ENCODE measurements at regions of chr20 and their contacts with region 1.

Region 1: DNA sequence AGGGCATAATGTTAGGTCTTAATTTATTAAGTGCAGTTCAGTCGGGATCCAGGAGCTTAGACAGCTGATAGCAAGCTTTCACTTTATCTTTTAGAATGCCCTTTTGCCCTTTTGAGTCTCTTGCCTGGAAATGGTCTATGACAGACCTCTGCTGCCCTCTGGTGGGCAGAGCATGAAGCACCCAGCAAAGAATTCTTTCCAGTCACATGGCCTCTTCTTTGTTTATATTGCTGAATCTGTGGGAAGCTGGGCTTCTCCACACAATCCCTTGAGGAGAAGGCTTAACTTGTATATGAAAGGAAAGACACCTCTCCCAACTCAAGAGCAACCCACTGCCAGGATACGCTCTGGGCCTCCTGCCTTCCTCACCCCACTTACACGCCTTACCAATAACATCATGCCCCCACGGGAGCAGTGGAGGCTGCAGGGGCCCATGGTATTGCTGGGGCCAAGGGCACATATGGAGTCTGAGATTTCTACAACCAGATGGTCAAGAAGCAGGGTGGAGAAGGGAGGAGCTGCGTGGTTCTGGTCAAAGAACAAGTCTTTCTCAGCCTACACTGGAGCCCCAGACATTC is 20.4 kb downstream of the WFDC3 start:
- DNase-seq: peak; percentile 81
- H3K27ac ChIP-seq: no peak overlapping the region
- CTCF ChIP-seq: peak; percentile 99

Region 2: DNA sequence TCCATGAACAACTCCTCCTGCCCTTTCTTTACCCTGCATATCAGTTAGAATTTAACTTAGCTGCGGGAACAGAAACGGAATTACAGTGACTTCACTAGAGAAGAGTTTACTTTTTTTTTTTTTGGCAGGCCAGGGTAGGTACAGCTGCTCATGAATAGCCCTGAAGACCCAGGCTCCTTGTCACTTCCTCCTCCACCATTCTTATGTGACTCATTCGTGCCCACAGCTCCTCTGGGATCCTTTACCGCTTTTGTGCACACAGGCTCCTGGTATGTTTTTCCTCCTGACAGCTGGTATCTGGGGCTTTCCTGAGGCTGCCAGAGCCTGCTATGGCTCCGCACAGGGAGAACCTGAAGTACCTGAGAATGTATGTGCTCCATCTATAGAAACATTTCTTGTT is 666.5 kb before region 1 on chr20:
- CTCF ChIA-PET with region 1: no interaction called
- POLR2A ChIA-PET with region 1: no interaction called
- DNase-seq: peak; percentile 58
- H3K27ac ChIP-seq: no peak overlapping the region
- CTCF ChIP-seq: no peak

Region 3: DNA sequence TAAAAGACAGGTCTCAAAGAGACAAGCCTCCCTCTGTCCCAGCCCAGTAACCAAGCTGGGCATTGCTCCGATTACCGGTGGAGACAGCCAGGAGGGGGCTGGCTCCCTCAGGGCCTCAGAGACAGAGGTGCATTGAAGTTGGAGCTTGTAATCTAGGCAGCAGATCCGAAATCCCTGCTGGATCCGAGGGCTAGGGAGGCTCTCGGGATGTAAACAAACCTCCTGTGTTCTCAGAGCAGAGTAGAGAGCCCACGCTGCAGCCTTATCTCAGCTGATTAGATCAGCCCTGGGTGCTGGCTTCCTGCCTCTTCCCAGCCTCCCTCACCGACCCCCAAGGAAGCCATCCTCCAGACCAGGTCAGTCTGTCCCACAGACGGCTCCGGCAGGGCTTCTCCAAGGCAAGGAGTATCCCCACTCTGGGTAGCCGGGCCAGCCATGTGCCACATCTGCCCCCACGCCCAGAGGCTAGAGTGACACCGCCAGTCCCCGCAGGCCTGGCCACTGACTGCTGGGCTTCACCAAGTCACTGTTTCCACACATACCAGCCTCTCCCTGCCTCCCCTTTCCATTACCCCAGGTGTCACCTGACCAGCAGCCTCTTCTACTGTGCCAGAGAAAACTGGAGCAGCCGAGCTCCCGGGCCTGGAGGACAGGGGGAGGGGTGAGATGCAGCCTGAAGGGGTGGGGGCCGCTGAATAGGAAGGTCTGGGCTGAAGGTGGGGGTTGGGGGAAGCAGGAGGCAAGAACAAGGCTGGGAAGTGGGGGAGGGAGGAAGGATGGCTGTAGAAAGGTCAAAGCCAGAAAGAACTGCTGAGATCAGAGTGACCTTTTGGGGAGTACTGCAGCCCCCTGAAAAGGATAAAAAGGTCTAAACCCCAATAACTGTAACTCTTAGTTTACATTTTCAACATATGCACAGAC is 429.1 kb before region 1 on chr20:
- CTCF ChIA-PET with region 1: interaction called, 8 read pairs
- POLR2A ChIA-PET with region 1: interaction called, 10 read pairs
- DNase-seq: peak; percentile 55
- H3K27ac ChIP-seq: peak overlapping the region; percentile 97
- CTCF ChIP-seq: no peak

Region 4: GRCh38 chr20:45419188-45420091 is 351.8 kb before region 1 on chr20:
- CTCF ChIA-PET with region 1: interaction called, 12 read pairs
- POLR2A ChIA-PET with region 1: no interaction called
- DNase-seq: peak; percentile 88
- H3K27ac ChIP-seq: peak overlapping the region; percentile 90
- CTCF ChIP-seq: no peak

Region 5: DNA sequence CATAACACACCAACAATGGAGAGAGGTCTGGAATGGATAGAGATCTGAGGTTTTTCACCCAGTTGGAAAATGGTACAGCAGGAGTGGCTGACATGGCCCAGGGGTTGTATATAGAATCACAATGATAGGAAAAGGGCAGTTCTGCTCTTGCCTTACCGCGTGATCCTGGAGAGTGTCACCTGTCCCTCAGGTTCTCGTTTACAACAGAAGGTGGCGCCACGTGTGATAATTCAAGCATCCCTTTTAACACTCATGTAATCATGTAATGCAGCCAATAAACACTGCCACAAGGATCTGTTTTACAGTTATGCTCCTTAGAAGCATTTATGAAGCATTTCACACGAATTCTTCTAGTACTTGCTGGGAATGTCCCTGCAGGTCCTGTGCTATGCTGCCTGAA is 314.6 kb before region 1 on chr20:
- CTCF ChIA-PET with region 1: interaction called, 14 read pairs
- POLR2A ChIA-PET with region 1: no interaction called
- DNase-seq: no peak
- H3K27ac ChIP-seq: no peak overlapping the region
- CTCF ChIP-seq: no peak; the same call in 1 of the 2 replicates

Region 6: DNA sequence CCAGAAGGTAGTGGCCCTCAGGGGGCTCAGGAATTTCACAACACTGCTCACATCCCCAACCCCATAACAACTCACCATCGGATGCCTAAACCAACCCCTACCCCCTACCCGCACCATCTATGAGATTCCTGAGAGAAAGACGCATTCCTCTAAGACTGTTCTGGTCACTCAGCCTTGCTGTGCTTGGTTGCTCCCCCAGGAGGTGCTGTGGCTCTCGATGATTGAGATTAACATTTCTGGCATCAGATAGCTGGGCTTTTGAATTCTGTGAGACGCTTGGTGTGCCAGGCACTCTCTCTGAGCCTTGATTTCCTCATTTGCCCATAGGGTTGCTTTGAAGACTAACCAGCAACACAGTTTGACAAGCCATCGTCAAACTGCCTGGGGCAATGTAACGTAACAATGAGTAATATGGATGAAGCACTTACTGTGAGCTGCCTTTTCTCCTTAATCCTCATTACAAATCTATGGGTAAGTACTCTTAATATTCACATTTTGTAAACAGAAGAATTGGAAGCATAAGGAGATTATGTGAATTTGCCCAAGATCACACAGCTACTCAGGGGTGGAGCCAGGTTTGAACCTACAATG is 233.0 kb before region 1 on chr20:
- CTCF ChIA-PET with region 1: interaction called, 25 read pairs
- POLR2A ChIA-PET with region 1: no interaction called
- DNase-seq: peak; percentile 85
- H3K27ac ChIP-seq: no peak overlapping the region
- CTCF ChIP-seq: no peak

Region 7: DNA sequence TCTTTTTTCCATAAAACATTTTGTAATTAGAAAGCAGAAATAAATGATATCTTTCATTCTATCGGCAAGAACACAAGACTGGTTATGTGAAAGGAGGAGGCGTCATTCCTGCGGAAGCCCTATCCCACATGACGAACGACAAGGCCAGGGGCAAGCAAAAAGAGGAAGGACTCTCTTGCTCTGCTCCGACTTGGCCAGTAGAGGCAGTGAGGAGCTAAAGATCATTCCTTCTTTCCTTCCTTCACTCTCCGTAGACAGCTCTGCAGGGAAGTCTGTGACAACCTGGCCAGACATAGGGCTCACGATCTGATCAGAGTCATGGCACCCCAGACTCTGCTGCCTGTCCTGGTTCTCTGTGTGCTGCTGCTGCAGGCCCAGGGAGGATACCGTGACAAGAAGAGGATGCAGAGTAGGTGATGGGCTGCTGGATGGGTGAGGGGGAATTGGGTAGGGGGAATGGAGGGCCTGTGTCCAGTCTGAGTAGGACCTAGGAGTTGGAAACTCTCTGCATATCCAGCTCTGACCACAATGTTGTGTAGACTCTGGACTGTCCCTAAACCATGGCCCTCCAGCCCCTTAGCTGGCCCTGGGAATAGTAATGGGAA is 141.7 kb before region 1 on chr20 and contains the start of gene WFDC10A:
- CTCF ChIA-PET with region 1: interaction called, 15 read pairs
- POLR2A ChIA-PET with region 1: no interaction called
- DNase-seq: peak; percentile 83
- H3K27ac ChIP-seq: no peak within 1 kb of the TSS
- CTCF ChIP-seq: peak; percentile 92

Region 8: DNA sequence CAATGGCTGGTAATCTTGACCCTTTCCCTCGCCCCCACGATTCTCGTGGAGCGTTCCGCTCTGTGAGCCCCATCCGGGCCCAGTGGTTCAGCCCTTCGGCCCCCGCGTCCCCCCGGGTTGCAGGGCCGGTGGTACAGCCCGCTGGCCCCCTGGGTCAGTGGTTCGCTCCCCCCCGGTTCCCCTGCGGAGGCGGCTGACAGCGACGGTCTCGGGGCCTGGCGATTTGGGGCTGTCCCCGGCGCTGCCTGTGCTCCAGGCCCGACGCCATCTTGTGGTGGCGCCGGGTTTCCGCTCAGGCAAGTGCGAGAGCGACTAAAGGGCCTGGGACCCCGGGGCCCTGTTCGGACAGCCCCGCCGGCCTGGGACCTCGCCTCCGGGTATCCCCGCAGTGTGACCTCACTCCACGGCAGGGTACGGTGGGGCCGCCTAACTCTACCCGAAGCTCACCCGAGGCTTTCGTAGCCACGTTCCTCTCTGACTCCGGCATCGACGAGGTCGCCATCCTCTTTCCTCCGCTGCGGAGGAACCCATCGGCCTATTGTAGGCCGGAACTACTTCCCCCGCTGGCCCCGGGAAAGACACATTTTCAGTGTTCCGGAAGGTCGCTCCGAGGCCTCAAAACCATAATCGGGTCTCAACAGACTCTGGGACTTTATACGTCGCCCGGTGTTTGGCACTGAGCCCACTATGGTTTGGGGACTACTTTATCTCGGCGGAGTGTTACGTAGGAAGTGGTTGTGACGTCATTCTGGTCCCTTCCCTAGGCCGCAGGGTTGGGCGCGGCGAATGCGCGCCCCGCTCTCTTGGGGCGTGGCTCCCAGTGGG is 200.6 kb after region 1 on chr20 and contains the start of gene ZNF335:
- CTCF ChIA-PET with region 1: no interaction called
- POLR2A ChIA-PET with region 1: no interaction called
- DNase-seq: peak; percentile 100
- H3K27ac ChIP-seq: peak within 1 kb of the TSS; percentile 99
- CTCF ChIP-seq: no peak

Measured in RWPE1 (cell line).